CD4-positive, alpha-beta memory T cell (primary cell): ENCODE measurements at regions of chr12 and their contacts with region 1.

Region 1: GRCh38 chr12:32139064-32139421 is 32.4 kb downstream of the BICD1 start:
- DNase-seq: peak in 1 of 5 donors; percentile 5
- H3K4me3 ChIP-seq: no peak overlapping the region
- H3K4me3 Mint-ChIP-seq: peak overlapping the region; percentile 83 to 90 (median 88)
- H3K27ac ChIP-seq: no peak overlapping the region
- H3K27ac Mint-ChIP-seq: peak overlapping the region in 5 of 7 donors; percentile 13 to 91 (median 74)
- H3K4me1 ChIP-seq: peaks cover 8% of the 10 kb centered on the region
- H3K4me1 Mint-ChIP-seq: peaks cover 15 to 34% (median 22%) of the 10 kb centered on the region in 4 donors
- H3K27me3 ChIP-seq: no peaks in the 10 kb centered on the region
- H3K27me3 Mint-ChIP-seq: no peaks in the 10 kb centered on the region

Region 2: GRCh38 chr12:32106517-32107358 is 32.3 kb before region 1 on chr12 and contains the start of gene BICD1:
- CTCF ChIA-PET with region 1: interaction called, 4 read pairs
- POLR2A ChIA-PET with region 1: interaction called, 3 read pairs
- intact Hi-C with region 1: loop called (anchors 1 kb)
- DNase-seq: peak; percentile 62 to 70 (median 66)
- H3K4me3 ChIP-seq: peak within 1 kb of the TSS; percentile 84 to 93
- H3K4me3 Mint-ChIP-seq: peak within 1 kb of the TSS; percentile 91 to 98 (median 98)
- H3K27ac ChIP-seq: peak within 1 kb of the TSS; percentile 57
- H3K27ac Mint-ChIP-seq: peak within 1 kb of the TSS; percentile 75 to 94 (median 91)
- H3K4me1 ChIP-seq: peaks cover 33% of the 10 kb centered on the region
- H3K4me1 Mint-ChIP-seq: peaks cover 25 to 35% (median 29%) of the 10 kb centered on the region in 4 donors
- H3K27me3 ChIP-seq: no peaks in the 10 kb centered on the region
- H3K27me3 Mint-ChIP-seq: no peaks in the 10 kb centered on the region
- total RNA-seq, gene BICD1: 16.1 to 20.3 TPM